ENCODE measurements at regions of chr6 and their contacts with region 1.

Region 1: DNA sequence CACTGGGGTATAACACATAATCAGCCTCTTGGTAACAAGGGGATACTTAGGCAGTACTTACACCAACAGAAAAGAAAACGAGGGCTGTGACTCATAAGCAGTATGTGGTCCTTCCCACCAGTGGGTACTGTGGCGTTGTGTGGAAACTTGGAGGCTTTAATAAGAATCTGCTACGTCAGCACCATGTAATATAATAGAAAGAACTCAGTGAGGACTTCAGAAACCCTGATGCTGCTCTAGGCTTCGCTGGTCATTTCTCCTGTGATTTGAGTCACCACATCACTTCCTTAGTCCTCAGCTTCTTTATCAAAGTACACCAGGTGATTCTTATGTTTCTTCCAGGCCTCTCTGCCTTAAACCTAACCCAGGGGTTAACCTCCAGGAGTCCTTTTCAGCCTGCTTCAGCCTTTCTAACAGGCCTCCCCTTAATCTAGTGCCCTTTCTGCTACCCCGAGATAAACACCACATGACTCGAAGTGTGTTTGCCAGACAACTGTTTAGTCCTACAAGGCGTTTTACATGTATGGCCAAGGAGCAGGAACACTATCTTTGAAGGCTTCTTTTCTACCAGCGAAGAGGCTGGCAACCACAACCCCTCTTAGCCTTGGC is 68.5 kb downstream of the FYN start:
- DNase-seq: peak; percentile 26
- ATAC-seq: peak; percentile 62
- H3K4me3 ChIP-seq: no peak overlapping the region
- H3K4me3 Mint-ChIP-seq: peak overlapping the region; percentile 48
- H3K27ac ChIP-seq: no peak overlapping the region
- H3K27ac Mint-ChIP-seq: peak overlapping the region; percentile 70
- H3K4me1 ChIP-seq: peaks cover 31 to 39% of the 10 kb centered on the region in 2 donors
- H3K4me1 Mint-ChIP-seq: peaks cover 46% of the 10 kb centered on the region
- H3K27me3 ChIP-seq: no peaks in the 10 kb centered on the region
- H3K27me3 Mint-ChIP-seq: no peaks in the 10 kb centered on the region
- CTCF ChIP-seq: no peak

Region 2: GRCh38 chr6:111709615-111710398 is 94.9 kb before region 1 on chr6:
- CTCF ChIA-PET with region 1: interaction called, 13 read pairs
- POLR2A ChIA-PET with region 1: no interaction called
- intact Hi-C with region 1: no loop called
- DNase-seq: peak; percentile 77
- ATAC-seq: peak; percentile 96
- H3K4me3 ChIP-seq: no peak overlapping the region
- H3K4me3 Mint-ChIP-seq: peak overlapping the region; percentile 6
- H3K27ac ChIP-seq: no peak overlapping the region
- H3K27ac Mint-ChIP-seq: peak overlapping the region; percentile 32
- H3K4me1 ChIP-seq: peaks cover 3 to 5% of the 10 kb centered on the region in 2 donors
- H3K4me1 Mint-ChIP-seq: no peaks in the 10 kb centered on the region
- H3K27me3 ChIP-seq: no peaks in the 10 kb centered on the region
- H3K27me3 Mint-ChIP-seq: no peaks in the 10 kb centered on the region
- CTCF ChIP-seq: peak; percentile 87

Region 3: DNA sequence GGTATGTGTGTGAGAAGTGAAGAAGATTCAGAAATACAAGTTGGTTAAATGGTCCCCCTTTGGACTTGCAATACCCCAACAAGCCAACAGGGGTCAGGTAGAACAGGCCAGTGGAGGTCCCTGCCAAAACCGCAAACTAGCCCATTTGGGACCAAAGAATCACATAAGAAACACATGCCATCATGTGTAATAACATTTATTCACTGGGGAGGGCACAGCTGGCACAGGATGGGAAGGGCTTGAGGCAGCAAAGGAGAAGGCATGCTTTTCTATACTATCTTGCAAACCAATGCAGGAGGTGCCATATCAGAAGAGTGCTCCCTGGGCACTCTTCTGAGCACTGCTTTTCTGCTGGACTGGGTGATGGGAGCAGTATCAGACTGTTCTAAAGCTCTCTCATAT is 83.0 kb before region 1 on chr6:
- CTCF ChIA-PET with region 1: no interaction called
- POLR2A ChIA-PET with region 1: no interaction called
- intact Hi-C with region 1: loop called (anchors 5 kb)
- DNase-seq: peak; percentile 54
- ATAC-seq: no peak
- H3K4me3 ChIP-seq: no peak overlapping the region
- H3K4me3 Mint-ChIP-seq: no peak overlapping the region
- H3K27ac ChIP-seq: no peak overlapping the region
- H3K27ac Mint-ChIP-seq: no peak overlapping the region
- H3K4me1 ChIP-seq: peaks cover 37 to 40% of the 10 kb centered on the region in 2 donors
- H3K4me1 Mint-ChIP-seq: peaks cover 41% of the 10 kb centered on the region
- H3K27me3 ChIP-seq: no peaks in the 10 kb centered on the region
- H3K27me3 Mint-ChIP-seq: no peaks in the 10 kb centered on the region
- CTCF ChIP-seq: peak; percentile 70

Region 4: DNA sequence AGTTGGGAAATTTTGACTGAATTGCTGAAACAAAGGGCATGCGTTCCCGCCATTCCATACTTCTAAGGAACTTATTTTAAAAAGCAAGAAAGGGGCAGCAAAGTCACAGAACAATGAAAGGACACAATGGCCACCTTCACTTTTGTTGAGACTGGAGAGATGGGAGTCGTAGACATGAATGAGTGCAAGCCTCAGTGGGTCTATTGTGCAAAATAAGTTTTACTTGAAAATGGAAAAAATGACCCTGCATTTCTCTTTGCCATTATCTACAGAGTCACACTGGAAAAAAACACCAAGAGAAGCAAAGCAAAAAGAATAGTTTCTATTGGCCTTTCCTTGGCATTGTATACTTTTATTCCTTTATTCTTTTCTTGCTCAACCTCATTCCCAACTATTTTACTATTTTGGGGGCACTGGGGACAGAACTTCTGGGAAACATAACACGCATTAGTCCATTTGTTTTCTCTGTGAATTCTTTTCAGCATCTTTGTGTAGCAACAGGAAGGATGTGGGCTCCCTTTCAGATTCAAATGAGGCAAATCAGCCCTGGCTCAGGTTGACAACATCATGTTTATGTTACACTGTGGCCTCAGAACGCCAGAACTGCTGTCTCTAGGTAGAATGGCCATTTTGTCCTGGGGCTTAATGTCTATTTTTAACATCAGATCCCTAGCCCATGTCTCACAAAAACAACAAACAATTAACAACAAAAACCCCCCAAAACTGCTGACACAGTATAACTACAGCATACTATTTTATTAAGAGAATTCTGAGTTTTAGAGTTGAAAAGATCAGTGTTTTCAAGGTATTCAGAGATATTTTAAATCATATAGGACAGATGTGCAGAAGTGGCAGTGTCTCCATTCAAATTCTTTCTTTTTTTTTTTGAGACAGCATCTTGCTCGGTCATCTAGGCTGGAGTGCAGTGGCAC is 53.7 kb before region 1 on chr6:
- CTCF ChIA-PET with region 1: interaction called, 3 read pairs
- POLR2A ChIA-PET with region 1: no interaction called
- intact Hi-C with region 1: loop called (anchors 5 kb)
- DNase-seq: peak; percentile 54
- ATAC-seq: peak; percentile 62
- H3K4me3 ChIP-seq: peak overlapping the region in 1 of 5 experiments; percentile 40
- H3K4me3 Mint-ChIP-seq: peak overlapping the region; percentile 69
- H3K27ac ChIP-seq: peak overlapping the region; percentile 35 to 68
- H3K27ac Mint-ChIP-seq: peak overlapping the region; percentile 94
- H3K4me1 ChIP-seq: peaks cover 68 to 75% of the 10 kb centered on the region in 2 donors
- H3K4me1 Mint-ChIP-seq: peaks cover 76% of the 10 kb centered on the region
- H3K27me3 ChIP-seq: no peaks in the 10 kb centered on the region
- H3K27me3 Mint-ChIP-seq: no peaks in the 10 kb centered on the region
- CTCF ChIP-seq: no peak

Region 5: GRCh38 chr6:111764238-111765175 is 40.2 kb before region 1 on chr6:
- CTCF ChIA-PET with region 1: interaction called, 3 read pairs
- POLR2A ChIA-PET with region 1: no interaction called
- intact Hi-C with region 1: loop called (anchors 2 kb)
- DNase-seq: peak; percentile 61
- ATAC-seq: peak; percentile 66
- H3K4me3 ChIP-seq: peak overlapping the region in 1 of 5 experiments; percentile 33
- H3K4me3 Mint-ChIP-seq: peak overlapping the region; percentile 71
- H3K27ac ChIP-seq: peak overlapping the region in 1 of 2 donors; percentile 54
- H3K27ac Mint-ChIP-seq: peak overlapping the region; percentile 77
- H3K4me1 ChIP-seq: peaks cover 63 to 66% of the 10 kb centered on the region in 2 donors
- H3K4me1 Mint-ChIP-seq: peaks cover 84% of the 10 kb centered on the region
- H3K27me3 ChIP-seq: no peaks in the 10 kb centered on the region
- H3K27me3 Mint-ChIP-seq: no peaks in the 10 kb centered on the region
- CTCF ChIP-seq: no peak

Region 6: GRCh38 chr6:111841822-111842221 is 37.1 kb after region 1 on chr6:
- CTCF ChIA-PET with region 1: interaction called, 8 read pairs
- POLR2A ChIA-PET with region 1: interaction called, 4 read pairs
- intact Hi-C with region 1: loop called (anchors 1 kb)
- DNase-seq: peak; percentile 53
- ATAC-seq: no peak
- H3K4me3 ChIP-seq: no peak overlapping the region
- H3K4me3 Mint-ChIP-seq: no peak overlapping the region
- H3K27ac ChIP-seq: peak overlapping the region; percentile 66 to 76
- H3K27ac Mint-ChIP-seq: no peak overlapping the region
- H3K4me1 ChIP-seq: peaks cover 67 to 78% of the 10 kb centered on the region in 2 donors
- H3K4me1 Mint-ChIP-seq: peaks cover 50% of the 10 kb centered on the region
- H3K27me3 ChIP-seq: no peaks in the 10 kb centered on the region
- H3K27me3 Mint-ChIP-seq: no peaks in the 10 kb centered on the region
- CTCF ChIP-seq: no peak

Region 7: GRCh38 chr6:111997078-111997852 is 192.5 kb after region 1 on chr6:
- CTCF ChIA-PET with region 1: interaction called, 5 read pairs
- POLR2A ChIA-PET with region 1: no interaction called
- intact Hi-C with region 1: loop called (anchors 1 kb)
- DNase-seq: peak; percentile 79
- ATAC-seq: peak; percentile 93
- H3K4me3 ChIP-seq: no peak overlapping the region
- H3K4me3 Mint-ChIP-seq: peak overlapping the region; percentile 30
- H3K27ac ChIP-seq: no peak overlapping the region
- H3K27ac Mint-ChIP-seq: no peak overlapping the region
- H3K4me1 ChIP-seq: peaks cover 4 to 6% of the 10 kb centered on the region in 2 donors
- H3K4me1 Mint-ChIP-seq: peaks cover 9% of the 10 kb centered on the region
- H3K27me3 ChIP-seq: peaks cover 0 to 11% (median 3%) of the 10 kb centered on the region in 4 experiments
- H3K27me3 Mint-ChIP-seq: peaks cover 21% of the 10 kb centered on the region
- CTCF ChIP-seq: peak; percentile 94